PC-3 (cell line): ENCODE measurements at regions of chrX and their contacts with region 1.

Region 1: DNA sequence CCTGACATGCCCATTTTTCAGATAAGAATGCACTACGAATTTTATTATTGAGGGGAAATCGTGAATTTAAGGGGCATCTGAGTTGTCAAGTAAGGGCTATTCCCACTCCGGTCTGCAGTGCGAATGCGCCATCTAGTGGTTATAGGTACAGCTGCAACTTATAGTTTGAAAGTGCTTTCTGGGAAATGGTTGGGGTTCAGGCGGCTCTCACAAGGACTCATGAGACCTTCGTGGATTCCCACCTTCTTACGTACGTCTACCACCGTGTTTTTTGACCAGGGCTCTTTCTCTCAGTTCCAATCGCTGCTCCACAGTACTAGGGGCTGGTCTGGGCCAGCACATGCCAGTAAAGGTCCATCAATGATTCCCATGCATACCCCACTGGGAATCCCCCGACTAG is 12.3 kb downstream of the MSL3 start:
- DNase-seq: peak; percentile 59
- ATAC-seq: peak; percentile 53
- H3K4me3 ChIP-seq: no peak overlapping the region
- H3K27ac ChIP-seq: no peak overlapping the region
- H3K4me1 ChIP-seq: no peaks in the 10 kb centered on the region
- H3K27me3 ChIP-seq: no peaks in the 10 kb centered on the region
- CTCF ChIP-seq: peak; percentile 86

Region 2: GRCh38 chrX:11143931-11144678 is 626.2 kb before region 1 on chrX:
- CTCF ChIA-PET with region 1: interaction called, 3 read pairs
- POLR2A ChIA-PET with region 1: no interaction called
- intact Hi-C with region 1: loop called (anchors 2 kb)
- DNase-seq: peak; percentile 91
- ATAC-seq: peak; percentile 88
- H3K4me3 ChIP-seq: peak overlapping the region; percentile 35; the same call in 1 of the 2 replicates
- H3K27ac ChIP-seq: no peak overlapping the region
- H3K4me1 ChIP-seq: no peaks in the 10 kb centered on the region
- H3K27me3 ChIP-seq: no peaks in the 10 kb centered on the region
- CTCF ChIP-seq: peak; percentile 68

Region 3: GRCh38 chrX:11724122-11725017 is 46.0 kb before region 1 on chrX:
- CTCF ChIA-PET with region 1: no interaction called
- POLR2A ChIA-PET with region 1: no interaction called
- intact Hi-C with region 1: loop called (anchors 2 kb)
- DNase-seq: peak; percentile 44
- ATAC-seq: peak; percentile 42
- H3K4me3 ChIP-seq: no peak overlapping the region
- H3K27ac ChIP-seq: no peak overlapping the region
- H3K4me1 ChIP-seq: no peaks in the 10 kb centered on the region
- H3K27me3 ChIP-seq: no peaks in the 10 kb centered on the region
- CTCF ChIP-seq: peak; percentile 73

Region 4: DNA sequence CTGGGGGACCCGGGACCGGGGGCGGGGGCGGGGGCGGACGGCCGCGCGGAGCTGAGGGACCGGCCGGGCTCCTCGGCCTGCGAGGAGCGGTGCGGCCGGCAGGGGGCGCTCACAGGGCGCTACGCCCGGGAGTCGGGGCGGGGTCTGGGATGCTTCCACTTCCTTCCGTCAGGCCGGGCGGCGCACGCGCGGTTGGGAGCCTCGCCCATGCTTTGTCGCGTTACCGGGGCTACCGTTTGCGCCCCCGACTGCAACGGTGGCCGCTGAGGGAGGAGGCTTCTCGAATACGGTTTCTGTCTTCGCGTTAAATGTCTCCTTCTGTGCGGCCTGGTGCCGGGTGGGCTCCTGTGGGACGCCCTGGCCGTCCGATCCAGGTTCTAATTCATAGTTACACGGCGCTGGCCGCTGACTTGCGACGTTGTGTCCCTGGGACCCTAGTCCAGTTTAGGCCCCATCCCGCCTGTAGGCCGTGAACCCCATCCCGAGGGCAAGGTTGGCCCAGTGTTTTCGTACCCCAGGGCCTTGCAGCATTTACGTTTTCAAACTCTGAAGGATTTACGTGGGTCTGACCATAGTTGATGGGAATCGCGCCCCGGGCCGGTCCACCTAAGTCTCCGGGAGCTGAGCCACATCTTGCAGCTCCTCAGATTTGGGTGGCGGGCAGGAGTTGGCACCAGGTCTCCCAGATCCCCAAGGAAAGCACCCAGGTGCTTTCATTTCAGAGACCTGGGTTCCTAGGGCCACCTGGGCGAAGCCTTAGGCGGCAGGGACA is 11.7 kb before region 1 on chrX:
- CTCF ChIA-PET with region 1: interaction called, 5 read pairs
- POLR2A ChIA-PET with region 1: interaction called, 13 read pairs
- intact Hi-C with region 1: no loop called
- DNase-seq: peak; percentile 83
- ATAC-seq: peak; percentile 49
- H3K4me3 ChIP-seq: peak overlapping the region; percentile 84
- H3K27ac ChIP-seq: peak overlapping the region; percentile 50
- H3K4me1 ChIP-seq: peaks cover 33% of the 10 kb centered on the region
- H3K27me3 ChIP-seq: no peaks in the 10 kb centered on the region
- CTCF ChIP-seq: peak; percentile 53

Region 5: DNA sequence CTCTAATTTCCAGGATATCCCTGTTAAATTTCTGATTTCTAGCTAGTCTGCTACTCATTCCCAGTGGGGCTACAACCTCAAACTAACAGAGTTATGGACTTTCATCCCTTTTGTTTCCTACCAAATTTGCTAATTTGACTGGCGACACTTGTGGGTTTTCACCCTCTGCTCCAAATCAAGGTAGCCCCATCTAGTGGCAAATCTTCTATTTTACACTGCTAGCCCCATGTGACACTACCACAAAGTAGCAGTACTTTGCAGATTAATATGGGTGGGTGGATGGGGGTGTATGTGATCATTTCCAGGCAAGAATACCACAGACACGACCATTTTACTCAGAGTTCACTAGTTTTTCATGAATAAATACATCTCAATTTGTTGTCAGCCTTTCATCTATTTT is 138.1 kb after region 1 on chrX:
- CTCF ChIA-PET with region 1: no interaction called
- POLR2A ChIA-PET with region 1: no interaction called
- intact Hi-C with region 1: loop called (anchors 5 kb)
- DNase-seq: peak; percentile 63
- ATAC-seq: peak; percentile 76
- H3K4me3 ChIP-seq: no peak overlapping the region
- H3K27ac ChIP-seq: no peak overlapping the region
- H3K4me1 ChIP-seq: no peaks in the 10 kb centered on the region
- H3K27me3 ChIP-seq: no peaks in the 10 kb centered on the region
- CTCF ChIP-seq: peak; percentile 73

Region 6: DNA sequence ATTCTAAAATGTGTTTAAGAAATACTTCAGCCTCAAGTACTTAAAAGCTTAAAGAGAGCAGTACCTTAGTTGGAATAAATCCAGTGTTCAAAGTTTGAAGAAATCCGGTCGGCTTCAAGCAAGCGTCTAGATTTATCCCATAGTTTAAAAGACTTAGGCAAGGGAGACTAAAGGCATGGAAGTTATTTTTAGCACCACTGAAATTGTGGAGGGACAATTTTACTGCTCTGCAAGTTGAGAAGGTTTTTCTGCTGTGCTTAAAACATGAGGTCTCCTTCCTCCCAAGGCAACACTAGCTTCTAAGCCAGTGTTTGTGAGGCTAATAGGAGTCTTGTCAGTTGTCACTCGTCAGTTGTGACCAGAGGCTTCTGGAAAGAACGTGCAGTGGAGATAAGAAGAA is 171.3 kb after region 1 on chrX:
- CTCF ChIA-PET with region 1: no interaction called
- POLR2A ChIA-PET with region 1: no interaction called
- intact Hi-C with region 1: no loop called
- DNase-seq: no peak
- ATAC-seq: no peak
- H3K4me3 ChIP-seq: no peak overlapping the region
- H3K27ac ChIP-seq: no peak overlapping the region
- H3K4me1 ChIP-seq: peaks cover 6% of the 10 kb centered on the region
- H3K27me3 ChIP-seq: no peaks in the 10 kb centered on the region
- CTCF ChIP-seq: no peak